GM12878 (cell line): ENCODE measurements at regions of chr9 and their contacts with region 1.

Region 1: GRCh38 chr9:122991370-122991830 is 42.1 kb upstream of the GPR21 start:
- DNase-seq: peak; percentile 23
- ATAC-seq: peak; percentile 84
- H3K4me3 ChIP-seq: no peak overlapping the region
- H3K27ac ChIP-seq: no peak overlapping the region
- H3K4me1 ChIP-seq: no peaks in the 10 kb centered on the region
- H3K27me3 ChIP-seq: no peaks in the 10 kb centered on the region
- CTCF ChIP-seq: peak; percentile 57 to 64 (median 60)
- EP300 ChIP-seq: no peak
- POLR2A ChIP-seq: no peak
- RAD21 ChIP-seq: peak; percentile 76

Region 2: GRCh38 chr9:122498883-122499288 is 492.5 kb before region 1 on chr9:
- CTCF ChIA-PET with region 1: interaction called, 12 read pairs
- POLR2A ChIA-PET with region 1: no interaction called
- RAD21 ChIA-PET with region 1: no interaction called
- SMC1A ChIA-PET with region 1: interaction called, 3 read pairs
- in situ Hi-C with region 1: no loop called
- intact Hi-C with region 1: no loop called
- DNase-seq: no peak
- ATAC-seq: peak; percentile 75
- H3K4me3 ChIP-seq: no peak overlapping the region
- H3K27ac ChIP-seq: no peak overlapping the region
- H3K4me1 ChIP-seq: no peaks in the 10 kb centered on the region
- H3K27me3 ChIP-seq: no peaks in the 10 kb centered on the region; a peak in 1 of 4 replicates
- CTCF ChIP-seq: peak; percentile 69 to 87 (median 87)
- EP300 ChIP-seq: no peak
- POLR2A ChIP-seq: no peak
- RAD21 ChIP-seq: peak; percentile 54

Region 3: GRCh38 chr9:122875523-122875922 is 115.9 kb before region 1 on chr9:
- CTCF ChIA-PET with region 1: interaction called, 12 read pairs
- POLR2A ChIA-PET with region 1: no interaction called
- RAD21 ChIA-PET with region 1: interaction called, 4 read pairs
- SMC1A ChIA-PET with region 1: interaction called, 9 read pairs
- in situ Hi-C with region 1: no loop called
- intact Hi-C with region 1: no loop called
- DNase-seq: peak; percentile 20
- ATAC-seq: peak; percentile 63
- H3K4me3 ChIP-seq: no peak overlapping the region
- H3K27ac ChIP-seq: no peak overlapping the region
- H3K4me1 ChIP-seq: no peaks in the 10 kb centered on the region
- H3K27me3 ChIP-seq: no peaks in the 10 kb centered on the region
- CTCF ChIP-seq: no peak
- EP300 ChIP-seq: 0 out of 4 replicates have a peak, but pooled peaks of 1 of the 2 experiments have one; percentile 12
- POLR2A ChIP-seq: no peak
- RAD21 ChIP-seq: no peak

Region 4: DNA sequence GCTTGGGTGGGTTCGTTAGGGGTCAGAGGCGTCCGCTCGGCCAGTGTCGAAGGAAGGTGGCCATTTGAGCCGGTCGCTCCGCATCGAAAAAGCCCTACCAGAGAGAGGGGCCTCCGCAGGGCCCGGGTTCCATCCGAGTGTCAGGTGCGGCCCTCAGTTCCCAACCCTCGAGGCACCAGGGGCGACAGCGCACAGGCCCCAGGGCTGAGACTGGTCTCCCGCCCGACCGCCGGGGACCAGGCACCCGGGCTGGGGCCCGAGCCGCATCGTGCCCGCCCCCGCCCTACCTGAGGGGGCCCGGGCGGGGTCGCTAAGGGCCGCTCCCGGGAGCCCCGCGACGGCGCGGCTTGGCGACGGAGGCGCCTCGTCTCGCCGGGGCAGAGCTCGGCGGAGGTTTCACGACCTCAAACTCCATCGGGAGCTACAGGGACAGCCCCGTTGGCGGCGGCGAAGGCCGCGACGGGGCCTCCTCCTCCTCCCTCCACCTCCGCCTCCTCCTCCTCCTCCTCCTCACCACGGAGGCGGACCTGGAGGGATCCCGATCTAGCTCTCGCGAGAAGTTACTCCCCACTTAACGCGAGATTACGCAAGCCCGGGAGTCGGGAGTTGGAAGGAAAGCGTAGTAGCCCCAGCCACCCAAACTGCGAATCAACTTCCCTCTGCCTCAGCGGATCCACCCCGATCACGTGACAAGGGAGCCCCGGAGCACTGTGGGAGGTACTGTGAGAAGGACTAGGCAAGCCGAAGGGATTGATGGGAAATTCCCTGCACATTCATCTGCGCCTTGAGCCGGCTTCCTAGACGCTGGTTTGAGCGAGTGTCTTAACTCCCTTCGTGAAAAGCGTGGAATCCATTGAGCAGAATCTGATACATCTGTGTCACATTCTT is 86.3 kb before region 1 on chr9 and contains the start of gene RC3H2:
- CTCF ChIA-PET with region 1: interaction called, 10 read pairs
- POLR2A ChIA-PET with region 1: interaction called, 4 read pairs
- RAD21 ChIA-PET with region 1: interaction called, 10 read pairs
- SMC1A ChIA-PET with region 1: interaction called, 18 read pairs
- in situ Hi-C with region 1: no loop called
- intact Hi-C with region 1: loop called (anchors 5 kb)
- DNase-seq: peak; percentile 99
- ATAC-seq: peak; percentile 88
- H3K4me3 ChIP-seq: peak within 1 kb of the TSS; percentile 98
- H3K27ac ChIP-seq: peak within 1 kb of the TSS; percentile 92
- H3K4me1 ChIP-seq: peaks cover 6% of the 10 kb centered on the region
- H3K27me3 ChIP-seq: no peaks in the 10 kb centered on the region
- CTCF ChIP-seq: no peak
- EP300 ChIP-seq: peak; percentile 31 to 38; a peak in 1 of 4 replicates
- POLR2A ChIP-seq: peak; percentile 94
- RAD21 ChIP-seq: no peak
- polyA plus RNA-seq, gene RC3H2: 7.2 to 9.1 TPM

Region 5: GRCh38 chr9:122940603-122941559 is 50.5 kb before region 1 on chr9 and contains the start of gene RABGAP1:
- CTCF ChIA-PET with region 1: interaction called, 5 read pairs
- POLR2A ChIA-PET with region 1: interaction called, 6 read pairs
- RAD21 ChIA-PET with region 1: interaction called, 10 read pairs
- SMC1A ChIA-PET with region 1: interaction called, 9 read pairs
- in situ Hi-C with region 1: no loop called
- intact Hi-C with region 1: no loop called
- DNase-seq: peak; percentile 94
- ATAC-seq: peak; percentile 97
- H3K4me3 ChIP-seq: peak within 1 kb of the TSS; percentile 96
- H3K27ac ChIP-seq: peak within 1 kb of the TSS; percentile 76
- H3K4me1 ChIP-seq: peaks cover 12% of the 10 kb centered on the region; the same call in 1 of the 2 replicates
- H3K27me3 ChIP-seq: no peaks in the 10 kb centered on the region
- CTCF ChIP-seq: no peak
- EP300 ChIP-seq: no peak
- POLR2A ChIP-seq: peak; percentile 93
- RAD21 ChIP-seq: no peak
- polyA plus RNA-seq, gene RABGAP1: 2.6 to 2.9 TPM

Region 6: DNA sequence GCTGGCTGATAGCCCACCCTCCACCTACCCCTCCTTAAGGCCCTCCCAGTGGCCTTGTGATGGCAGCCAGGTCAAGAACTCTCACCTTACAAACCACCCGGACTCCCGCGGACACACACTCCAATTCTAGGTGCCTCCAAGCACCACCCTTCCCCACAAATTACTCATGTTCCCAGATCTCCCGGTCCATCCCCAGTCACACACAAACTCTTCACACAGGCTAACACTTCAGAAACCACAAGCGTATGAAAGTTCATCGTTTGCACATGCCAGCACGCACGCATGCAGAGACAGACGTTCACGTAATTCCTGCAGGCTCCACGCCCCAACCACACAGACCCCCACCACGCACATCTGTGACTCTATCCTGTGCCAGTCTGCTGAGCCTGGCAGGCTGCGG is 1497.8 kb after region 1 on chr9:
- CTCF ChIA-PET with region 1: no interaction called
- POLR2A ChIA-PET with region 1: no interaction called
- RAD21 ChIA-PET with region 1: no interaction called
- SMC1A ChIA-PET with region 1: no interaction called
- in situ Hi-C with region 1: no loop called
- intact Hi-C with region 1: no loop called
- DNase-seq: no peak
- ATAC-seq: no peak
- H3K4me3 ChIP-seq: no peak overlapping the region
- H3K27ac ChIP-seq: no peak overlapping the region
- H3K4me1 ChIP-seq: peaks cover 7% of the 10 kb centered on the region
- H3K27me3 ChIP-seq: peaks cover 0 to 2% of the 10 kb centered on the region in 2 experiments; a peak in 2 of 4 replicates
- CTCF ChIP-seq: no peak
- EP300 ChIP-seq: no peak
- POLR2A ChIP-seq: no peak
- RAD21 ChIP-seq: no peak